Colonic mucosa (tissue), 4 donors: ENCODE measurements at regions of chr13 and their contacts with region 1.

Region 1: GRCh38 chr13:52194184-52194868 is 34.9 kb upstream of the NEK3 start:
- DNase-seq: peak; percentile 91
- H3K4me3 ChIP-seq: peak overlapping the region; percentile 52
- H3K27ac ChIP-seq: peak overlapping the region; percentile 74
- H3K4me1 ChIP-seq: no peaks in the 10 kb centered on the region
- H3K27me3 ChIP-seq: no peaks in the 10 kb centered on the region
- CTCF ChIP-seq: no peak

Region 2: GRCh38 chr13:51895906-51896888 is 298.1 kb before region 1 on chr13:
- intact Hi-C with region 1: loop called (anchors 10 kb)
- DNase-seq: peak; percentile 60
- H3K4me3 ChIP-seq: no peak overlapping the region
- H3K27ac ChIP-seq: no peak overlapping the region
- H3K4me1 ChIP-seq: no peaks in the 10 kb centered on the region
- H3K27me3 ChIP-seq: no peaks in the 10 kb centered on the region
- CTCF ChIP-seq: peak; percentile 46

Region 3: GRCh38 chr13:51911860-51912510 is 282.3 kb before region 1 on chr13:
- intact Hi-C with region 1: no loop called
- DNase-seq: no peak
- H3K4me3 ChIP-seq: no peak overlapping the region
- H3K27ac ChIP-seq: no peak overlapping the region
- H3K4me1 ChIP-seq: no peaks in the 10 kb centered on the region
- H3K27me3 ChIP-seq: no peaks in the 10 kb centered on the region
- CTCF ChIP-seq: no peak

Region 4: GRCh38 chr13:52428295-52428694 is 234.0 kb after region 1 on chr13:
- intact Hi-C with region 1: no loop called
- DNase-seq: no peak
- H3K4me3 ChIP-seq: no peak overlapping the region
- H3K27ac ChIP-seq: no peak overlapping the region
- H3K4me1 ChIP-seq: no peaks in the 10 kb centered on the region
- H3K27me3 ChIP-seq: no peaks in the 10 kb centered on the region
- CTCF ChIP-seq: no peak